Activated B cell treated with CpG ODN at 0.5 μM for 24 hours (primary cell): ENCODE measurements at regions of chr9 and their contacts with region 1.

Region 1: GRCh38 chr9:109469646-109470358 is 28.3 kb downstream of the PTPN3 start:
- DNase-seq: peak; percentile 40
- ATAC-seq: peak; percentile 93
- H3K4me3 Mint-ChIP-seq: no peak overlapping the region
- H3K27ac Mint-ChIP-seq: no peak overlapping the region
- H3K4me1 Mint-ChIP-seq: no peaks in the 10 kb centered on the region
- H3K27me3 Mint-ChIP-seq: peaks cover 27% of the 10 kb centered on the region
- CTCF ChIP-seq: peak; percentile 51

Region 2: DNA sequence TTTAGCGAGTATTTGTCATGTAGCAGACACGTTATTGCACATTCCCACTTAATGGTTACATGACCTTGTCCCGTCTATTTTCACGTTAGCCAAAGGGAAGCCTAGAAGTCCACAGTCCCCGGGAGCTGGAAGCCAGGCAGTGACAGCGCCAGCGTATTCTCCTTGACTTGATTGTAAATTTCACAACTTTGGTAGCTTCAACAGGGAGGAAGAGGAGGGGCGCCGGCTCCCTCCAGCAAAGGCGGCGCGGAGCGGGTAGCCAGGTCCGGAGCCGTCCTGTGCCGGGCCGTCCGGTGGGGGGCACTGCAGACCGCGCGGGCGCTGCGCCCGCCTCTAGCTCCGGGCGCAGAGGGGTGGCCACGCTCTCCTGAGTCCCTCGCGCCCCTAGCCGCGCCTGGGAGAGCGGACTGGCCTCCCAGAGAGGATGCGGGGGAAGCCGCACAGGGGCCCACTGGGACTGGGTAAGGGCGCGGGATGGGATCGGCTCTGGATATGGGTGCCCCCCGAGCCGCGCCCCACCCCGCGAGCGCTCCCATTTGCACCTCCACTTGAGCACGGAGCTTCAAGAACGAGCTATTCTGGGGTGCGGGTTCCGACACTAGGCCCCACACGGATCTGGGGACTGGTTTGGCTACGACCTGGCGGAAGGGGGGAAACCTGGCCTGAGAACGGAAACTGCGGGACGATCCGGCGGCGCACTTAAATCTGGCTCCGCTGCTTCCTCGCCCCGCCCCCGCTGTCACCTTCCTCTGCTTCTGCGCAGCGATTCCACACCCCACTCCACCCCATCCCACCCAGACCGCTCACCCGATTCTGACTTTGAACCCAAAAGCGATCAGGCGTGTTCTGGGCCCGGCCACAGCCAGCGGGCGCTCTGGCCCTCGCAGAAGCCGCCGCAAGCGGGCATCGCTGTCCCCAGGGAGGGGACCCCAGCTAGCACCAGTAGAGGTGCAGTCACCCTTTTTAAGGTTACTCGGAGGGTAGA is 2004.0 kb before region 1 on chr9:
- CTCF ChIA-PET with region 1: no interaction called
- POLR2A ChIA-PET with region 1: no interaction called
- intact Hi-C with region 1: loop called (anchors 5 kb)
- DNase-seq: peak; percentile 50
- ATAC-seq: peak; percentile 90
- H3K4me3 Mint-ChIP-seq: peak overlapping the region; percentile 67
- H3K27ac Mint-ChIP-seq: no peak overlapping the region
- H3K4me1 Mint-ChIP-seq: peaks cover 8% of the 10 kb centered on the region
- H3K27me3 Mint-ChIP-seq: peaks cover 30% of the 10 kb centered on the region
- CTCF ChIP-seq: no peak

Region 3: GRCh38 chr9:109101810-109102209 is 368.0 kb before region 1 on chr9:
- CTCF ChIA-PET with region 1: interaction called, 3 read pairs
- POLR2A ChIA-PET with region 1: no interaction called
- intact Hi-C with region 1: loop called (anchors 10 kb)
- DNase-seq: no peak
- ATAC-seq: peak; percentile 50
- H3K4me3 Mint-ChIP-seq: no peak overlapping the region
- H3K27ac Mint-ChIP-seq: peak overlapping the region; percentile 35
- H3K4me1 Mint-ChIP-seq: peaks cover 42% of the 10 kb centered on the region
- H3K27me3 Mint-ChIP-seq: no peaks in the 10 kb centered on the region
- CTCF ChIP-seq: no peak

Region 4: DNA sequence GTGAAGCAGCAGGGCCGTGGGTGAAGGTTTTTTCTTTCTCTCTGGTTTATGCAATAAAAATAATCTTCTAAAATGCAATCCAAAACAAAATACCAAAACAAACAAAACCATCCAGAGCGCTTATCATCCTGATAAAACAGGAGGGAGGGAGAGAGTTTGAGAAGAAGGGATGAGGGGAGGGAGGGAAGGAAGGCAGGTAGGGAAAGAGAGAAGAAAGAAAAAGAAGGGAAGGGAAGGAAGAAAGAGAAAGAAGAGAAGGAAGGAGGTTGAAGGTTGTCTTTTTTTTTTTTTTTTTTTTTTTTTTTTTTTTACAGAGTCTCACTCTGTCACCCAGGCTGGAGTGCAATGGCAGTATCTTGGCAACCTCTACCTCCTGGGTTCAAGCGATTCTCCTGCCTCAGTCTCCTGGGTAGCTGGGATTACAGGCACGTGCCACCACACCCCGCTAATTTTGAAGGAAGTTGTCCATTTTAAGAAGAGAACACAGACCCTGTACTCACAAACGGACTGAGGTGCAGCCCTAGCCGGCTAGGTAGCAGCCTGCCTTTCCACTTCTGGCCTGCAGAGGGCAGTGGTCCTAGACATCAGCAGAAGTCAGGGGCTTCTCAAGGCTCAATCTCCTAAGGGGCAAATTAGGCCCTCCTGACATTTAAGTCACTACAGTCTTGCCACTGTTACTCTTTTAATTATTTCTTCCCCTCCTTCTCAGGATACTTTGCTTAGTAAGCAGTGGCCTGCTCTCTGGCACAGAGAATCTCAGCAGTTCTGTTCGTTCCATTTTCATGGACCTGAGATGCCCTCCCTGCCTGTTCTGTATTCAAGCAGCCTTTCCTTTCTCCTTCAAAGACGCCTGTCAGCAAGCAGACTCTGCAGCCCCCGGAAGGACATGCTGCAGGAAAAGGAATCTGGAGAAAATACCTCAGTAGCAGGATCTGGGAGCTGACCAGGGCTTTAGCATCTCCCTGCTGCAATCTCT is 225.4 kb before region 1 on chr9:
- CTCF ChIA-PET with region 1: interaction called, 10 read pairs
- POLR2A ChIA-PET with region 1: no interaction called
- intact Hi-C with region 1: loop called (anchors 1 kb)
- DNase-seq: peak; percentile 42
- ATAC-seq: peak; percentile 88
- H3K4me3 Mint-ChIP-seq: no peak overlapping the region
- H3K27ac Mint-ChIP-seq: no peak overlapping the region
- H3K4me1 Mint-ChIP-seq: peaks cover 4% of the 10 kb centered on the region
- H3K27me3 Mint-ChIP-seq: peaks cover 13% of the 10 kb centered on the region
- CTCF ChIP-seq: peak; percentile 48

Region 5: DNA sequence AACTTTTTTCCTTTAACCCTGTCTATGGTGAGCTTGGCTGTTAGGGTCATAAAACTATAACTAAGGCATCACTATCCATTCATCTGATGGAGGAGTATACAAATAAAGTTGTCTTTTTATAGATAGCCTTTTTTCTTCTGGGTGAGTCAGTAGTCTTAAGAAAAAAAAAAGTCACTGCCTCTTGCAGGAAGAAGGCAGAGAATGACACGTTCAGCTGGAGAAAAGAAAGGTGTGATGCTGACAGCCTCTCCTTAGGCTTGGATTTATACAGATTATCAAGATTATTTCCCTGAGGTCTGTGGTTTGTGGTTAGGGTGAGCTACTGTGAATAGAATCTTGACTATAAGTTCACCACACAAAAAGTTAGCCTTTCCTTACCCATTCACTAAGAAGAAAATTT is 171.9 kb before region 1 on chr9:
- CTCF ChIA-PET with region 1: no interaction called
- POLR2A ChIA-PET with region 1: no interaction called
- intact Hi-C with region 1: no loop called
- DNase-seq: no peak
- ATAC-seq: no peak
- H3K4me3 Mint-ChIP-seq: no peak overlapping the region
- H3K27ac Mint-ChIP-seq: no peak overlapping the region
- H3K4me1 Mint-ChIP-seq: no peaks in the 10 kb centered on the region
- H3K27me3 Mint-ChIP-seq: peaks cover 14% of the 10 kb centered on the region
- CTCF ChIP-seq: no peak

Region 6: GRCh38 chr9:109411798-109412352 is 57.9 kb before region 1 on chr9:
- CTCF ChIA-PET with region 1: interaction called, 7 read pairs
- POLR2A ChIA-PET with region 1: no interaction called
- intact Hi-C with region 1: loop called (anchors 2 kb)
- DNase-seq: no peak
- ATAC-seq: peak; percentile 53
- H3K4me3 Mint-ChIP-seq: peak overlapping the region; percentile 62
- H3K27ac Mint-ChIP-seq: peak overlapping the region; percentile 89
- H3K4me1 Mint-ChIP-seq: peaks cover 60% of the 10 kb centered on the region
- H3K27me3 Mint-ChIP-seq: peaks cover 3% of the 10 kb centered on the region
- CTCF ChIP-seq: no peak

Region 7: DNA sequence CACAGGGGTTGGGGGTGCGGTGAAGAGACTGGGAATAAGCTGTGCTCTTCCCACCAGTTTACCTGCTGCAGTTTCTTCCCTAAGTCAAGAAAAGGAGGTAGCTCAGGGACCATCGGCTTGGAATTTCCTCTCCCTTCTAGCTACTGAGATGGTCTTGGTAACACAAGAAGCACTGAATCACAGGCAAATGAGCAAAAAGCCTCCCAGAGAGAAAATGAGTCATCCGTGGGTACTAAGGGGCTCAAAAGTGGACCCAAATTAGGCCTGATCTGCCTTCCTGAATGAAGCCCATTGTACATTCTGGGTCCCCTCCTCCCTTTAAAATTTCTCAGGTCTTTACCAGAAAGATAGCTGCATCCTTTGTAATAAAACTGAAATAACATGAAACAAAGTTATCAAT is 21.6 kb before region 1 on chr9:
- CTCF ChIA-PET with region 1: interaction called, 3 read pairs
- POLR2A ChIA-PET with region 1: interaction called, 10 read pairs
- intact Hi-C with region 1: no loop called
- DNase-seq: no peak
- ATAC-seq: no peak
- H3K4me3 Mint-ChIP-seq: no peak overlapping the region
- H3K27ac Mint-ChIP-seq: no peak overlapping the region
- H3K4me1 Mint-ChIP-seq: no peaks in the 10 kb centered on the region
- H3K27me3 Mint-ChIP-seq: peaks cover 41% of the 10 kb centered on the region
- CTCF ChIP-seq: no peak

Region 8: GRCh38 chr9:110069326-110070248 is 599.8 kb after region 1 on chr9:
- CTCF ChIA-PET with region 1: no interaction called
- POLR2A ChIA-PET with region 1: no interaction called
- intact Hi-C with region 1: no loop called
- DNase-seq: no peak
- ATAC-seq: no peak
- H3K4me3 Mint-ChIP-seq: peak overlapping the region; percentile 42
- H3K27ac Mint-ChIP-seq: peak overlapping the region; percentile 7
- H3K4me1 Mint-ChIP-seq: peaks cover 91% of the 10 kb centered on the region
- H3K27me3 Mint-ChIP-seq: no peaks in the 10 kb centered on the region
- CTCF ChIP-seq: no peak